GM12878 (cell line): ENCODE measurements at regions of chr21 and their contacts with region 1.

Region 1: DNA sequence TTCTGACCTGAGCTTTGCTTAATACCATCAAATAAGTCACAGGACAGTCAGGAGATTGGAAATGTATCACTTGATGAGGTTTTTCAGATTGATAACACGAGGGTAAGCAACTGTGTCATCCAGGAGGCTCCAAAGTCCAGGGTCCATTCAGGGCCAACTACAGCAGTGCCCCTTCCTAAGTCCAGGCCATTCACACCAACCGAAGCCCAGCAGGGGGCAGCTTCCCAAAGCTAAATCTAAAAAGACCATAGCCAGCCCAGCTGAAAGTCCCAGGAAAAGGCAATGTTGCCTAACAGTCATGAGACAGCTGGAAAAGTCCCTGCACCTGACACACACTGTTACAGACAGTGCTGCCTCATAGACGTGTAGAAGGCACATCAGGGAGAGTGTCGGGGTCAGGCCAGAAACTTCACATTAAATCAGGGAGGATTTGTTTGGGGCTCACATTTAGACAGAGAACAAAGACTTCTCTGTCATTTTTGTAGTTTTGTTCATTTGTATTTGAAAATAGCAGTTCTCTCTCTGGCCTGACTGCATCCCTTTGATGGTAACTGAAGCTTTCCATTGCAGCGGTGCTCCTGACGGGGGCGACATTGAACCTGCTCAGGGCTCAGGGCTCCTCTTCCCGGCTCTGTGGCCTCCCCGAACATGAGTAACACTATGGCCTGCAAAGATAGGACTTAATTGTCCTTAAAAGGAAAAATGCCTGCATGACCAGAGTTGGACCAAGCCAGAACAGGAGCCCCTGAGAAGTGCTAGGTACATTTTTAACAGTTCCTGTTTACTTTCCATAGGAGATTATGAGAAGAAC is 200.4 kb downstream of the NRIP1 start:
- DNase-seq: no peak
- ATAC-seq: peak; percentile 95
- H3K4me3 ChIP-seq: no peak overlapping the region
- H3K27ac ChIP-seq: peak overlapping the region; percentile 40
- H3K4me1 ChIP-seq: peaks cover 13% of the 10 kb centered on the region
- H3K27me3 ChIP-seq: no peaks in the 10 kb centered on the region
- CTCF ChIP-seq: peak; percentile 87 to 89 (median 87)
- EP300 ChIP-seq: peak in 1 of 2 experiments; percentile 44; a peak in 1 of 4 replicates
- POLR2A ChIP-seq: no peak
- RAD21 ChIP-seq: peak; percentile 95

Region 2: DNA sequence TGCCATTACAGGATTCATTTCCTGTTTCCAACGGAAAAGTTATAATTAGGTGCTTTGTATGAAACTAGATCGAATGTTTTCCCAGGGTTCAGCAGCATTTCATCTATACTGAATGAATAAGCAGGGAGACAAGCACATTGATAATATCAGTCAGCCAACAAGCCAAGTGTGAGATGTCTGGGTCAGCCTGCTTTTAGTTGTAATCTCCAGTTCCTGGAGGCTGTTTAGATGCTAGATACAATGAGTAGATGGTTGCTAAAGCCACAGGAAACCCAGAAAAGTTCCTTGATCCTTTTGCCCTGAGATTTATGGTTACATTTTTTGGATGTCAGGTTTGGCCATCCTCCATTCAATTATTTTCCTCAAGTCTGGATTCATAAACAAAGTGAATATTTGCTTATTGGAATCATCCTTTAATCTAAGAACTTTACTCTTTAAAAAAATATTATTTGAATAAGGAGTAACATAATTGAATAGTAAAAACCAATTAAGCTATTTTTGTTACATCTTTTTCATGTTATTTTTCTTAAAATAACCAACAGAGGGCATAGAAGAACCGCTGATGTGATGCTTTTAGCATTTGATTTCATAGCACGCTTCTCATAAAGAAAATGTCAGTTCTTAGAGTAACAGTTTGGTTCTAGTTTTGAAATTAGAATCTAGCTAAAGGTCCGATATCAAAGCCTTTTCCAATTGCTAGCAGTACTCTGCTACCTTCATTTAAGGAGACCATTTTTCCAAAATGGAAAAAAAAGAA is 558.1 kb before region 1 on chr21:
- CTCF ChIA-PET with region 1: no interaction called
- POLR2A ChIA-PET with region 1: no interaction called
- RAD21 ChIA-PET with region 1: no interaction called
- SMC1A ChIA-PET with region 1: no interaction called
- in situ Hi-C with region 1: no loop called
- intact Hi-C with region 1: loop called (anchors 5 kb)
- DNase-seq: no peak
- ATAC-seq: no peak
- H3K4me3 ChIP-seq: no peak overlapping the region
- H3K27ac ChIP-seq: no peak overlapping the region
- H3K4me1 ChIP-seq: no peaks in the 10 kb centered on the region
- H3K27me3 ChIP-seq: no peaks in the 10 kb centered on the region; a peak in 1 of 4 replicates
- CTCF ChIP-seq: peak in 2 of 3 experiments; percentile 9 to 37; a peak in 2 of 6 replicates
- EP300 ChIP-seq: no peak
- POLR2A ChIP-seq: no peak
- RAD21 ChIP-seq: peak; percentile 34

Region 3: GRCh38 chr21:14737922-14738321 is 126.5 kb before region 1 on chr21:
- CTCF ChIA-PET with region 1: interaction called, 5 read pairs
- POLR2A ChIA-PET with region 1: no interaction called
- RAD21 ChIA-PET with region 1: interaction called, 3 read pairs
- SMC1A ChIA-PET with region 1: interaction called, 6 read pairs
- in situ Hi-C with region 1: no loop called
- intact Hi-C with region 1: loop called (anchors 5 kb)
- DNase-seq: no peak
- ATAC-seq: peak; percentile 81
- H3K4me3 ChIP-seq: no peak overlapping the region
- H3K27ac ChIP-seq: peak overlapping the region; percentile 20; the same call in 1 of the 2 replicates
- H3K4me1 ChIP-seq: peaks cover 23% of the 10 kb centered on the region
- H3K27me3 ChIP-seq: no peaks in the 10 kb centered on the region
- CTCF ChIP-seq: peak; percentile 51 to 65 (median 61)
- EP300 ChIP-seq: no peak
- POLR2A ChIP-seq: no peak
- RAD21 ChIP-seq: peak; percentile 86

Region 4: DNA sequence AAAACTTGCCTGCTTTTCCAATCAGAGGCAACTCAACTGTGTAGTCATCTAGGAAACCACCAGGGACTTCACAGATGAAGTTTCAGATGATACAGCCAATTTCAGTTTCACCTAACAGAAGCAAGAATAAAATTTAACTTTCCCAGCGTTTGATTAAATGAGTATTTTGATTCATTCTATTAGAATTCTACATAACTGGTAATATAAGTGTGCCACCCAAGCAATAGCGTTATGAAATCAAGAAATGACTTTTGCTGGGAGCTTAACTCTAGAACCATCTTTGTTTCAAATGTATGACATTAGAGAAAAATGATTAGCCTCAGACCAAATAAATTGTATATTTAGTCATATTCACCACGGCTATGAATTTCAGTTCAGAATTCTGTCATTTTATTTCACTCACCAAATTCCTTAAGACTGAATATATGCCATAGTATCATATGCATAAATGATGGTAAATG is 38.9 kb before region 1 on chr21:
- CTCF ChIA-PET with region 1: interaction called, 6 read pairs
- POLR2A ChIA-PET with region 1: no interaction called
- RAD21 ChIA-PET with region 1: no interaction called
- SMC1A ChIA-PET with region 1: no interaction called
- in situ Hi-C with region 1: no loop called
- intact Hi-C with region 1: loop called (anchors 5 kb)
- DNase-seq: peak; percentile 34
- ATAC-seq: peak; percentile 86
- H3K4me3 ChIP-seq: no peak overlapping the region
- H3K27ac ChIP-seq: peak overlapping the region; percentile 79
- H3K4me1 ChIP-seq: peaks cover 9% of the 10 kb centered on the region; the same call in 1 of the 2 replicates
- H3K27me3 ChIP-seq: no peaks in the 10 kb centered on the region
- CTCF ChIP-seq: no peak
- EP300 ChIP-seq: peak; percentile 15 to 37; a peak in 1 of 4 replicates
- POLR2A ChIP-seq: no peak
- RAD21 ChIP-seq: no peak

Region 5: GRCh38 chr21:15051644-15052458 is 187.4 kb after region 1 on chr21:
- CTCF ChIA-PET with region 1: interaction called, 15 read pairs
- POLR2A ChIA-PET with region 1: no interaction called
- RAD21 ChIA-PET with region 1: interaction called, 7 read pairs
- SMC1A ChIA-PET with region 1: interaction called, 3 read pairs
- in situ Hi-C with region 1: no loop called
- intact Hi-C with region 1: no loop called
- DNase-seq: no peak
- ATAC-seq: peak; percentile 84
- H3K4me3 ChIP-seq: peak overlapping the region; percentile 62
- H3K27ac ChIP-seq: peak overlapping the region; percentile 83
- H3K4me1 ChIP-seq: peaks cover 9% of the 10 kb centered on the region
- H3K27me3 ChIP-seq: no peaks in the 10 kb centered on the region
- CTCF ChIP-seq: no peak
- EP300 ChIP-seq: no peak
- POLR2A ChIP-seq: no peak
- RAD21 ChIP-seq: no peak

Region 6: DNA sequence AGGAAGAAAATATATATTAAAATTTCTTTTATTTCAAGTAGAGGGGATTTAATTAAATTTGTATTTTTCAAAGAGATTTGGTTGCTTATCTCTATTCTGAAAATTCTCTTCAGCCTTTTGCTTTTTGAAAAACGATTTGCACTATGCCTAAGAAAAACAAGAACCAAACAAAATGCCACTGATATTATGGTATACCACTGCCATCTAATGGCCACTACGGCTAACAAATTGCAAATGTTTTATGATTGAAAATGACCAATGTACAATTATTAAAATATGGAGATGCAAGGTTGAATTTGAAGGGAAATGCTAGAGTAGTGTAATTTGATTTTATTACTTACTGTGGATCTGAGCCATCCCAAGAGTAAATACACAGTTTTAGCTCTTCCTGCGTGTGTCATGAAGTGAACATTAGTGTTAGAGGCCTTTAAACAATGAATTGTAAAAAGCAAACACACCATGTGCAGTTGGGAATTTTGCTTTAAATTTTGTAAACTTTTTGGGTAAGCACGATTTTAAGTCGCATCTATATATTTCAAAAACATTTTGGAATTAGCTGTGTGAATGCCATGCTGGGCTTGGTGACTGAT is 728.0 kb after region 1 on chr21:
- CTCF ChIA-PET with region 1: no interaction called
- POLR2A ChIA-PET with region 1: no interaction called
- RAD21 ChIA-PET with region 1: no interaction called
- SMC1A ChIA-PET with region 1: interaction called, 3 read pairs
- in situ Hi-C with region 1: no loop called
- intact Hi-C with region 1: loop called (anchors 5 kb)
- DNase-seq: no peak
- ATAC-seq: no peak
- H3K4me3 ChIP-seq: no peak overlapping the region
- H3K27ac ChIP-seq: no peak overlapping the region
- H3K4me1 ChIP-seq: no peaks in the 10 kb centered on the region
- H3K27me3 ChIP-seq: no peaks in the 10 kb centered on the region
- CTCF ChIP-seq: peak; percentile 35 to 66 (median 51); a peak in 5 of 6 replicates
- EP300 ChIP-seq: no peak
- POLR2A ChIP-seq: no peak
- RAD21 ChIP-seq: peak; percentile 88